CD8-positive, alpha-beta T cell (primary cell): ENCODE measurements at regions of chr13 and their contacts with region 1.

Region 1: GRCh38 chr13:44435142-44435982 is 61.7 kb downstream of the SERP2 start:
- DNase-seq: peak; percentile 79 to 96 (median 87)
- ATAC-seq: peak; percentile 84
- H3K4me3 ChIP-seq: peak overlapping the region; percentile 57 to 58
- H3K4me3 Mint-ChIP-seq: peak overlapping the region; percentile 89
- H3K27ac ChIP-seq: peak overlapping the region; percentile 49 to 70
- H3K27ac Mint-ChIP-seq: peak overlapping the region; percentile 81
- H3K4me1 ChIP-seq: peaks cover 24% of the 10 kb centered on the region
- H3K4me1 Mint-ChIP-seq: peaks cover 29% of the 10 kb centered on the region
- H3K27me3 ChIP-seq: no peaks in the 10 kb centered on the region
- H3K27me3 Mint-ChIP-seq: peaks cover 5% of the 10 kb centered on the region
- CTCF ChIP-seq: no peak

Region 2: GRCh38 chr13:43085545-43085944 is 1349.8 kb before region 1 on chr13:
- CTCF ChIA-PET with region 1: no interaction called
- POLR2A ChIA-PET with region 1: no interaction called
- intact Hi-C with region 1: loop called in 1 of 2 experiments (anchors 10 kb)
- DNase-seq: peak in 2 of 9 experiments; percentile 29 to 48
- ATAC-seq: no peak
- H3K4me3 ChIP-seq: no peak overlapping the region
- H3K4me3 Mint-ChIP-seq: no peak overlapping the region
- H3K27ac ChIP-seq: no peak overlapping the region
- H3K27ac Mint-ChIP-seq: no peak overlapping the region
- H3K4me1 ChIP-seq: no peaks in the 10 kb centered on the region
- H3K4me1 Mint-ChIP-seq: peaks cover 14% of the 10 kb centered on the region
- H3K27me3 ChIP-seq: no peaks in the 10 kb centered on the region
- H3K27me3 Mint-ChIP-seq: no peaks in the 10 kb centered on the region
- CTCF ChIP-seq: peak; percentile 83

Region 3: DNA sequence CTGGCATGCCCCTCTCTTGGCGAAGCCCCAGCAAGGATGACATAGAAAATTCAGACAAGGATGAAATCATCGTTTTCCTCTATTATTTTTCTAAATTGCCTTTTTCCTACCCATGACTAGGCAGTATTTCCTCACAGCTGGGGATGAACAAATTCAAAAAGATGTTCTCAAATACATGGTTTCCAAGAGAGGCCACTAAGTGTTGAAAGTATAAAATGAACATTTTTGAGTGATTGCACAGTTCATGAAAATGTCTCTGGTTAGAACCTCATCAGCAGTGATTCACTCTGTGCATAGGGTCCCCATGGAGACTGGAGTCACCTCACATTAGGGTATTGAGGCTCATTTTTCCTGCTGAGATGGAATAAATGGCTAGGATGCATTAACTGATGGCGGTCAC is 1038.3 kb before region 1 on chr13:
- CTCF ChIA-PET with region 1: no interaction called
- POLR2A ChIA-PET with region 1: no interaction called
- intact Hi-C with region 1: no loop called
- DNase-seq: no peak
- ATAC-seq: no peak
- H3K4me3 ChIP-seq: no peak overlapping the region
- H3K4me3 Mint-ChIP-seq: no peak overlapping the region
- H3K27ac ChIP-seq: no peak overlapping the region
- H3K27ac Mint-ChIP-seq: no peak overlapping the region
- H3K4me1 ChIP-seq: no peaks in the 10 kb centered on the region
- H3K4me1 Mint-ChIP-seq: no peaks in the 10 kb centered on the region
- H3K27me3 ChIP-seq: peaks cover 0 to 2% of the 10 kb centered on the region in 2 experiments
- H3K27me3 Mint-ChIP-seq: peaks cover 2% of the 10 kb centered on the region
- CTCF ChIP-seq: no peak

Region 4: DNA sequence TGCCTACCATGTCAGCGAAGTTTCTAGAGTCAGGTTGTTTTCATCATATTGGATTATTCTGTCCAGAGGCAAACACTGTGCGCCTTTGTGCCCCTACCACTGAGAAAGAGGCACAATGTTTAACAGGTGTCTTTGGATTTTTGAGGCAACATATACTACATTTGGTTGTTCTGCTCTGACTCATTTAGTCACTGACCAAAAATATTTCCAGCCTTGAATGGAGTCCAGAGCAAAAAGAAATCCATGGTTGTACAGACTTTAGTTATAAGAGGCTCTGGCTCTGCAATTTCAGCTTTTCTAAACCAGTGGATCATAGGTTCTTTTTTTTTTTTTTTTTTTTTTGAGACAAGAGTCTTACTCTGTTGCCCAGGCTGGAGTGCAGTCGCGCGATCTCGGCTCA is 519.9 kb before region 1 on chr13:
- CTCF ChIA-PET with region 1: interaction called, 11 read pairs
- POLR2A ChIA-PET with region 1: no interaction called
- intact Hi-C with region 1: no loop called
- DNase-seq: no peak
- ATAC-seq: no peak
- H3K4me3 ChIP-seq: no peak overlapping the region
- H3K4me3 Mint-ChIP-seq: no peak overlapping the region
- H3K27ac ChIP-seq: no peak overlapping the region
- H3K27ac Mint-ChIP-seq: no peak overlapping the region
- H3K4me1 ChIP-seq: no peaks in the 10 kb centered on the region
- H3K4me1 Mint-ChIP-seq: no peaks in the 10 kb centered on the region
- H3K27me3 ChIP-seq: no peaks in the 10 kb centered on the region
- H3K27me3 Mint-ChIP-seq: peaks cover 8% of the 10 kb centered on the region
- CTCF ChIP-seq: no peak

Region 5: GRCh38 chr13:44141725-44142539 is 293.4 kb before region 1 on chr13:
- CTCF ChIA-PET with region 1: no interaction called
- POLR2A ChIA-PET with region 1: no interaction called
- intact Hi-C with region 1: loop called (anchors 1 kb)
- DNase-seq: peak; percentile 84 to 98 (median 91)
- ATAC-seq: peak; percentile 96
- H3K4me3 ChIP-seq: peak overlapping the region; percentile 78 to 81
- H3K4me3 Mint-ChIP-seq: peak overlapping the region; percentile 91
- H3K27ac ChIP-seq: peak overlapping the region; percentile 68 to 89
- H3K27ac Mint-ChIP-seq: peak overlapping the region; percentile 94
- H3K4me1 ChIP-seq: peaks cover 13% of the 10 kb centered on the region
- H3K4me1 Mint-ChIP-seq: peaks cover 15% of the 10 kb centered on the region
- H3K27me3 ChIP-seq: no peaks in the 10 kb centered on the region
- H3K27me3 Mint-ChIP-seq: peaks cover 2% of the 10 kb centered on the region
- CTCF ChIP-seq: no peak

Region 6: GRCh38 chr13:44243198-44243857 is 192.0 kb before region 1 on chr13:
- CTCF ChIA-PET with region 1: interaction called, 4 read pairs
- POLR2A ChIA-PET with region 1: interaction called, 5 read pairs
- intact Hi-C with region 1: loop called (anchors 5 kb)
- DNase-seq: peak in 4 of 9 experiments; percentile 18 to 44 (median 27)
- ATAC-seq: peak; percentile 46
- H3K4me3 ChIP-seq: no peak overlapping the region
- H3K4me3 Mint-ChIP-seq: no peak overlapping the region
- H3K27ac ChIP-seq: no peak overlapping the region
- H3K27ac Mint-ChIP-seq: no peak overlapping the region
- H3K4me1 ChIP-seq: no peaks in the 10 kb centered on the region
- H3K4me1 Mint-ChIP-seq: peaks cover 5% of the 10 kb centered on the region
- H3K27me3 ChIP-seq: no peaks in the 10 kb centered on the region
- H3K27me3 Mint-ChIP-seq: peaks cover 2% of the 10 kb centered on the region
- CTCF ChIP-seq: no peak

Region 7: DNA sequence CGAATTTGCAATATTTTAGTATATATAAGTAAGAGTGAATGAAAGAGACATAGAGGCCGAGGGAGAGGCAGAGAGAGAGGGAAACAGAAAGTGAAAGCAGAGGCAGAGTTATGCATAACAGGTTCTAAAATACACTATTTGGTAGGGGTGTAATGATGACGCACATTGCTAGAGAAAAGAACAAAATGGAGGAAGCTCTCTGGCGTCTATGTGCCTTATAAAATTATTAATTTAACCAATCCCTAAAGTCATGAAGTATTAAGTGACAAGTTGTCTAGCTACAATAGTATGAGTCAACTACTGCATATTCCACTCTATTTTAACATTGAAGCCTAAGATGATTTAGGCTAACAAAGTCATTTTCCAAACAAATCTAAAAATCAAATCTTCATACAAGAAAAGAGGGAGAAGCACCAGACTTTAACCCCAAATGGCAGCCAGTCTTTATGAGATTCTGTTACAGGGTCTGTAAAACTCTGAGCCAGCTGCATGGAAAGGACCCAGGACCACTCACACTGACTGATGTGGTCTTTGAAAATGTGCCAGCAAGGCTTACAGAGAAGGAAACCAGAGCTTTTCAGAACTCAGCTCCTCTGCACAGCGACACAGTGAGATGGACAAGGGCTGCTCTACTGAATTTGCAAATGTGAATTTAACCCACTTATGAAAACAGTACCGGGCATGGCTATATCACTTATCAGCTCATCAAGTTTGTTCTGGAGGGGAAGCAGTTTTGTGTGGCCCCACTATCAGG is 160.7 kb before region 1 on chr13:
- CTCF ChIA-PET with region 1: interaction called, 6 read pairs
- POLR2A ChIA-PET with region 1: no interaction called
- intact Hi-C with region 1: loop called (anchors 1 to 2 kb)
- DNase-seq: peak in 8 of 9 experiments; percentile 17 to 91 (median 37)
- ATAC-seq: peak; percentile 92
- H3K4me3 ChIP-seq: peak overlapping the region; percentile 34 to 41
- H3K4me3 Mint-ChIP-seq: peak overlapping the region; percentile 73
- H3K27ac ChIP-seq: peak overlapping the region; percentile 81 to 96
- H3K27ac Mint-ChIP-seq: peak overlapping the region; percentile 98
- H3K4me1 ChIP-seq: peaks cover 35% of the 10 kb centered on the region
- H3K4me1 Mint-ChIP-seq: peaks cover 51% of the 10 kb centered on the region
- H3K27me3 ChIP-seq: no peaks in the 10 kb centered on the region
- H3K27me3 Mint-ChIP-seq: no peaks in the 10 kb centered on the region
- CTCF ChIP-seq: no peak